Gastrocnemius medialis (tissue), 4 donors: ENCODE measurements at regions of chr18 and their contacts with region 1.

Region 1: DNA sequence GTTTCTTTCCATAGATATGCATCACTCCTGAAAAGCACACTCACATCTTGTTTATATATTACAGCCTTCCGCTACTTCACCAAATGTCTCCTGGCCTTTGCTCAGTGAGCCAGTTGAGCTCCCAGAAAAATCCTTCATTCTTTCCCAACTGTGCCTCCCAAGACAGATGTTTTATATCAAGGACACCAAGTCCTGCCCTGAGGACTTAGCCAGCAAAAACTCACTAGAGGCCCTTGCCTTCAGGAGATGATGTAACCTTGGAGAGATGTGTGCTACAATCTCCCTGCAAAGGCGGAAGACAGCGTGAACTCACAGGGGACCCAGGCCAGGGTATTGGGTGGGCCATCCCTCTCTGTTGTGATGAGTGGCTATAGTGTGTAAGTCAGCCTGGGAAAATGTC is 86.1 kb upstream of the CTAGE1 start:
- DNase-seq: peak in 1 of 2 donors; percentile 15
- ATAC-seq: peak; percentile 50 to 68
- H3K4me3 ChIP-seq: no peak overlapping the region
- H3K27ac ChIP-seq: no peak overlapping the region
- H3K4me1 ChIP-seq: no peaks in the 10 kb centered on the region
- H3K27me3 ChIP-seq: no peaks in the 10 kb centered on the region
- CTCF ChIP-seq: no peak
- POLR2A ChIP-seq: no peak

Region 2: GRCh38 chr18:21955757-21956652 is 547.8 kb before region 1 on chr18:
- in situ Hi-C with region 1: no loop called
- intact Hi-C with region 1: no loop called
- DNase-seq: peak; percentile 25 to 36
- ATAC-seq: peak; percentile 66 to 75
- H3K4me3 ChIP-seq: no peak overlapping the region
- H3K27ac ChIP-seq: no peak overlapping the region
- H3K4me1 ChIP-seq: no peaks in the 10 kb centered on the region
- H3K27me3 ChIP-seq: no peaks in the 10 kb centered on the region
- CTCF ChIP-seq: peak; percentile 53 to 88 (median 60)
- POLR2A ChIP-seq: no peak

Region 3: GRCh38 chr18:22523481-22523880 is 19.7 kb after region 1 on chr18:
- in situ Hi-C with region 1: no loop called
- intact Hi-C with region 1: loop called (anchors 2 kb)
- DNase-seq: no peak
- ATAC-seq: no peak
- H3K4me3 ChIP-seq: no peak overlapping the region
- H3K27ac ChIP-seq: no peak overlapping the region
- H3K4me1 ChIP-seq: no peaks in the 10 kb centered on the region
- H3K27me3 ChIP-seq: no peaks in the 10 kb centered on the region
- CTCF ChIP-seq: no peak
- POLR2A ChIP-seq: no peak

Region 4: DNA sequence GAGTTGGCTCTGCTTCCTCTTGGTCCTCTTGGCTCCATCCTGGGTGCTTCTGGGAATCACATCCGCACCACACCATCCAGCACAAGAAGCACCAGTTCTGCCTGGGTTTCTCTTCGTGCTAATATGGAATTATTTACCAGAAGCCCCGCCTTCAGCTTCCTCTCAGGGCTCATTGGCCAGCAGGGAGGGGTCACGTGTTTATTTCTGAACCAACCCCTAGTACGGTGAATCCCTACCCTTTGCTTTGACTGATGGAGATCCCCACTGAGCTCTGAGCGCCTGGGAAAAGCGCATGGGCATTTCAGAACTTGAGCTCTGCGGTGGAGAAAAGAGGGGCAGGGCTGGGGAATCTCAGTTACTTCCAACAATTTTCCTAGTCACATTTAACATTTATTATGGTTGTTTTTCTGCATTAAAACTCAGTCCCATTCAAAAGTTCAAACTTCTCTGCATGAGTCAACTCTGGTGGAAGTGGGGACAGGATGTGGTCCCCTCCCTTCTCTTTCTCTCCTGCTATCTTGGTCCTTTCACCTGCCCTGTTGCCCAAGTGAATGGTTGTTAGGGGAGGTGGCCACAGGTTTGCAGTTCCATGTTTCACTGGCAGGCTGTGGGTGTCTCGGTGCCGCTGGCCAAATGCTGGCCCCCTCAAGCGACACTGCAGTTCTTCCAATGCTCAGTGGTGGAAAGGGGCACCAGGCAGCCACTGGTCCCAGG is 1434.4 kb after region 1 on chr18:
- in situ Hi-C with region 1: no loop called
- intact Hi-C with region 1: no loop called
- DNase-seq: no peak
- ATAC-seq: no peak
- H3K4me3 ChIP-seq: no peak overlapping the region
- H3K27ac ChIP-seq: no peak overlapping the region
- H3K4me1 ChIP-seq: no peaks in the 10 kb centered on the region
- H3K27me3 ChIP-seq: no peaks in the 10 kb centered on the region
- CTCF ChIP-seq: no peak
- POLR2A ChIP-seq: no peak